ENCODE measurements at regions of chr13 and their contacts with region 1.

Region 1: DNA sequence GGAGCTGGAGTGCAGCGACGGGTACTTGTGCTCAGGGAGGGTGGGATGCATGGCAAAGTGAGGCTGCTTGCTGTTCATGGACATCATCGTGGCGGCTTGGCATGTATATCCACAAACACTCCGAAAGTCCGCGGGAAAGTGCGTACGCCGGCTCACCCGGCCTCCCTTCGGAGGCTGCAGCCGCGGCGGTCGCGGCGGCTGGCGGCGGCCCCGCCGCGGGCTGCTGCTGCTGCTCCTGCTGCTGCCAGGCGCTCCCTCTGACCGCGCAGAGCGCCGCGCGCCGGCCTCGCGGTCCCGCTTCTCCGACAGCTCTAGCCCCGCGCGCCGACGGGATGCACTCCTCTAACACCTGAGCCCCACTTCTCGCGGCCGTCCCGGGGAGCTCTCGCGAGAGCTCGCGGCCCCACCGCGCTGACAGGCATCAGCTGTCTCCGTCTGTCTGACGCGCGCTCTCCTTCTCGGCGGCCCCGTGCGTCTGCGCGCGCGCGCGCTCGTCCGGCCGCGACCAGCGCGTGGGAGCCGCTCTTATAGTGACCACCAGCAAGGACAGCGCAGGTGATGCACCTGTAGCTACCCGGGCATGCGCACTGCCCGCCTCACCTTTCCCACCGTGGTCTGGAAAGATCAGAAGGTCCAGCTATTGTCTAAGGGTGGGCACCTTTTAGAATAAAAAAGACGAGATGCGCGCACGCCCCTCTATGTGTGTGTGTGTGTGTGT is at the start of gene POU4F1:
- DNase-seq: peak; percentile 94
- H3K4me3 ChIP-seq: peak within 1 kb of the TSS; percentile 63
- H3K27ac ChIP-seq: peak within 1 kb of the TSS; percentile 24
- H3K4me1 ChIP-seq: peaks cover 26% of the 10 kb centered on the region
- H3K27me3 ChIP-seq: peaks cover 94% of the 10 kb centered on the region
- CTCF ChIP-seq: no peak
- total RNA-seq, gene POU4F1: 12.6 and 16.8 TPM in 2 replicates

Region 2: DNA sequence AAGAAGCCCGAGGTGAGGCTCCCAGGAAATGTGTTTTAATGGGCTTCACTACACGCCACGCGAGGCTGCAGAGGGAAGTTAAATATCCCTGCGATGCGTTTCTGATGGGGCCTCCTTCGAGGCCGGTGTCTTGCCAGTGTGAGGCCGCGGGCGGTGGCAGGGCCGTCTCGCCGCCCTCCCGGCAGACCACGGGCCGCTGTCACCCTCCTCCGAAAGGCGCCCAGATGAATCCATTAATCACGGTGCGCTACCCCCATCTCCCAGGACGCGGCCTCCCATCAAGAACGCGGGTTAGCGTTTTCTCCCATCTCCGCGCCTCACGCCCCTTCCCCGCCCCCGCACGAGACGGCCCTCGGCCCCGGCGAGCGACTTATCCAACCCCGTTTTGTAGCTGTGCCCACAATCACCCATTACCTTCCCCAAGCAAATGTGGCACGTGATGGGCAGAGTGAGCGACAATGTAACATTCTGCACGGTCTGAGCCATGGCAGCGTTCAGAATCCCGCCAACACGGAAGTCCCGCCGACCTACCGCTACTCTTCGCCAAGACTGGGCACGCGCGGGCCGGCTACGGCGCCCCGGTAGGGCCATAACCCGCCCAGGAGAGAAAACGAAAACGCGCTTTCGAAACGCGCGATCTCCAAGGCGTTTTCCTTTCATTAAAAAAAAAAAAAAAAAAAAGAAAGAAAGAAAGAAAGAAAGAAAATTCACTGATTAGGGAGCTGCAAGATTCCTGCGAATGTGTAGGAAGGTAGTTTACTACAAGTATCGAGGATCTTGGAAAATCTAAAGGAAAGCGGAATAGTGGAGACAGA is 55.4 kb after region 1 on chr13 and contains the start of gene OBI1:
- CTCF ChIA-PET with region 1: no interaction called
- POLR2A ChIA-PET with region 1: no interaction called
- intact Hi-C with region 1: loop called (anchors 2 kb)
- DNase-seq: peak; percentile 93
- H3K4me3 ChIP-seq: peak within 1 kb of the TSS; percentile 92
- H3K27ac ChIP-seq: peak within 1 kb of the TSS; percentile 84
- H3K4me1 ChIP-seq: peaks cover 5% of the 10 kb centered on the region
- H3K27me3 ChIP-seq: no peaks in the 10 kb centered on the region
- CTCF ChIP-seq: no peak
- total RNA-seq, gene OBI1: 24.2 and 24.3 TPM in 2 replicates

Region 3: DNA sequence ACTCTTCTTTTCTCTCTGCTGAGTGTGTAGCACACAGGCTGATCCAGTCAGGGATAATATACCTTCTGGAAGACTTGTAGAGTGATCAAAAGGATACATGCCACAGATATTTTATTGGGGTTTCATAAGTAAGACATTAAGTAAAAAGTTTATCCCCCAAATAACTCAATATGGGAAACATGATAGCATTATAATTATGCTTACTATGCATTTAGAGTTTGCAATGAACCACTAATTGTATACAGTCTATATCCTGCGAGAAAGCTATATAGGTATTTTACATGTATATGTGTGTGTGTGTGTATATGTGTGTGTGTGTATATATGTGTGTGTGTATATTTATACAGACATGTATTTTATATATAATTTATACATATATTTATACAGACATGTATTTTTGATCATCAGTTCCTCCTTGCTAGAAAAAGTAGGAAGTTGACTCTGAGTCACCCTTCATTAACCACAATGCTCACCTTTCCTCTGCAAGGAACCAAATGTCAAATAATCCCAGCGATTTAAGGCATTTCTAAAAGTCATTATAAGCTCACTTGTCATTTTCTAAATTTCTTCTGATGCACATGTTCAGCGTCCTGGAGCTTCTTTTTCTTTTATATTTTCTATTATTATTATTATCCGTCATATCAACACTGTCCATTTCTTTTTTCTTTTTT is 368.1 kb after region 1 on chr13:
- CTCF ChIA-PET with region 1: no interaction called
- POLR2A ChIA-PET with region 1: no interaction called
- intact Hi-C with region 1: no loop called
- DNase-seq: no peak
- H3K4me3 ChIP-seq: no peak overlapping the region
- H3K27ac ChIP-seq: no peak overlapping the region
- H3K4me1 ChIP-seq: no peaks in the 10 kb centered on the region
- H3K27me3 ChIP-seq: no peaks in the 10 kb centered on the region
- CTCF ChIP-seq: no peak

Region 4: GRCh38 chr13:79533781-79534400 is 930.5 kb after region 1 on chr13:
- CTCF ChIA-PET with region 1: no interaction called
- POLR2A ChIA-PET with region 1: no interaction called
- intact Hi-C with region 1: loop called (anchors 10 kb)
- DNase-seq: no peak
- H3K4me3 ChIP-seq: no peak overlapping the region
- H3K27ac ChIP-seq: no peak overlapping the region
- H3K4me1 ChIP-seq: no peaks in the 10 kb centered on the region
- H3K27me3 ChIP-seq: no peaks in the 10 kb centered on the region
- CTCF ChIP-seq: no peak